Lower leg skin (tissue), 4 donors: ENCODE measurements at regions of chr9 and their contacts with region 1.

Region 1: DNA sequence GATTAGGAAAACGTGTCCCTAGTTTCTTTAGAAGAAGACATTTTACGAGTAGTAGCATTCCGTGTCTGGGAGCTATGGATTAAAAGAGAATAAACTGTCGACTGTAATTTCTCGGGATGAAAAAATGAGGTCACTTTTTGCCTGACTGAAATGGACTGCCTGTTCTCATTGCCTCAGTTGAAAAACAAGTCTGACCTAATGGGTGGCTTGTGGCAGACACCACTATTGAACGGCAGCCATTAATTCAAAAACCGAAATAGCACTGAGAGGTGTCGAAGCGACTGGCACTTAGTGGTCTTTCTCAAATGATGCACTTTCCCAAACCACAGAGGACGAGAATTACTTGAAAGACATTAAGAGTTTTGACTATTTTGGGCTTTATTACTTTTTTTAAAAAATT is 35.4 kb downstream of the OSTF1 start:
- DNase-seq: no peak
- H3K4me3 ChIP-seq: no peak overlapping the region
- CTCF ChIP-seq: no peak
- POLR2A ChIP-seq: no peak

Region 2: GRCh38 chr9:75142202-75142601 is 18.5 kb after region 1 on chr9:
- intact Hi-C with region 1: loop called (anchors 1 kb)
- DNase-seq: no peak
- H3K4me3 ChIP-seq: no peak overlapping the region
- CTCF ChIP-seq: no peak
- POLR2A ChIP-seq: no peak

Region 3: DNA sequence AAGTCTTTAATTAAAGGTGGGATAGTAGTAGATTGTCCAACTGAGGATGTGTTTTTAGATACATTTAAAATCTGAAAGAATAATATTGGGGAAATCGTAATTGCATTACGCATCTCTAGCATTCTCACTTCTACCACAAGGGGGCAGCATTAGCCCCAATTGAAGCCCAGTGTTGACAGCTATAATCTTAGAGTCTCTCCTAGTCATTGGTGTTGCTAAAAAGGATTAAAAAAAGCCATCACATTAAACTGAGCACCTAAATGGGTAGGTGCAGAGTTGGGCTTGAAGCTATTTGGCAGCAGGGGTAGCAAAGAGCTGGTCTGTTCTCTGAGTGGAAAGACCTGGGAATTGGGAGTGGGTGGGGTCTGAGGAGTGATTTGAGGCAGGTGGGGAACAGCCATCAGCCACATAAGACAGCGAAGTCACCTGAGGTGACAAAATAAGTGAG is 141.9 kb after region 1 on chr9:
- intact Hi-C with region 1: no loop called
- DNase-seq: peak in 1 of 2 donors; percentile 23
- H3K4me3 ChIP-seq: no peak overlapping the region
- CTCF ChIP-seq: no peak
- POLR2A ChIP-seq: no peak